Activated naive CD4-positive, alpha-beta T cell treated with anti-CD3 and anti-CD28 coated beads for 36 hours (primary cell): ENCODE measurements at regions of chr2 and their contacts with region 1.

Region 1: DNA sequence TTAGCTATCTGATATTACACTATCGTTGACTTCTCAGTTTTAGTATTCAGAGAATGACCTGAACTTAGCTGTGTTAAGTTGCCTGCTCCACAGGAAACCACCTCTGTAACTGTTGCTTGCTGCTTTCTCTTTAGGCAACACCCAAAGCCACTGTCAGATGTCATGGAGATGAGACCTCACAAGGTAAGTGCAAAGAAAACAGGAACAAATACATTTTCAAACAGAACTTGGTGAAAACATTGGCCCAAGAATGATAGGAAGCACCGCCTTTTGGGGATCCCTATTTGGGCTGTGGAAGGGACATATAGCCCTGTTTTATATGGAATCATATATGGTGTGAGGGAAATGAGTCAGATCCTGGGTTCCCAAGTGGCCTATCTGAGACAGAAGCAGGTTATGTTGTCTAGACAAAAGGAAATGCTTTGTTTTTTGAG is 143.4 kb downstream of the UBE2E3 start:
- DNase-seq: peak; percentile 65
- H3K4me3 Mint-ChIP-seq: peak overlapping the region; percentile 65
- H3K27ac Mint-ChIP-seq: peak overlapping the region; percentile 89
- H3K4me1 Mint-ChIP-seq: peaks cover 54% of the 10 kb centered on the region
- H3K27me3 Mint-ChIP-seq: no peaks in the 10 kb centered on the region

Region 2: GRCh38 chr2:180472133-180472532 is 651.7 kb before region 1 on chr2:
- CTCF ChIA-PET with region 1: no interaction called
- intact Hi-C with region 1: no loop called
- DNase-seq: no peak
- H3K4me3 Mint-ChIP-seq: no peak overlapping the region
- H3K27ac Mint-ChIP-seq: no peak overlapping the region
- H3K4me1 Mint-ChIP-seq: no peaks in the 10 kb centered on the region
- H3K27me3 Mint-ChIP-seq: no peaks in the 10 kb centered on the region

Region 3: GRCh38 chr2:181140414-181140813 is 16.6 kb after region 1 on chr2:
- CTCF ChIA-PET with region 1: interaction called, 5 read pairs
- intact Hi-C with region 1: loop called (anchors 1 kb)
- DNase-seq: no peak
- H3K4me3 Mint-ChIP-seq: peak overlapping the region; percentile 68
- H3K27ac Mint-ChIP-seq: peak overlapping the region; percentile 65
- H3K4me1 Mint-ChIP-seq: peaks cover 63% of the 10 kb centered on the region
- H3K27me3 Mint-ChIP-seq: no peaks in the 10 kb centered on the region

Region 4: GRCh38 chr2:181165199-181165868 is 41.5 kb after region 1 on chr2:
- CTCF ChIA-PET with region 1: no interaction called
- intact Hi-C with region 1: loop called (anchors 2 kb)
- DNase-seq: peak; percentile 36
- H3K4me3 Mint-ChIP-seq: peak overlapping the region; percentile 54
- H3K27ac Mint-ChIP-seq: peak overlapping the region; percentile 90
- H3K4me1 Mint-ChIP-seq: peaks cover 53% of the 10 kb centered on the region
- H3K27me3 Mint-ChIP-seq: no peaks in the 10 kb centered on the region

Region 5: DNA sequence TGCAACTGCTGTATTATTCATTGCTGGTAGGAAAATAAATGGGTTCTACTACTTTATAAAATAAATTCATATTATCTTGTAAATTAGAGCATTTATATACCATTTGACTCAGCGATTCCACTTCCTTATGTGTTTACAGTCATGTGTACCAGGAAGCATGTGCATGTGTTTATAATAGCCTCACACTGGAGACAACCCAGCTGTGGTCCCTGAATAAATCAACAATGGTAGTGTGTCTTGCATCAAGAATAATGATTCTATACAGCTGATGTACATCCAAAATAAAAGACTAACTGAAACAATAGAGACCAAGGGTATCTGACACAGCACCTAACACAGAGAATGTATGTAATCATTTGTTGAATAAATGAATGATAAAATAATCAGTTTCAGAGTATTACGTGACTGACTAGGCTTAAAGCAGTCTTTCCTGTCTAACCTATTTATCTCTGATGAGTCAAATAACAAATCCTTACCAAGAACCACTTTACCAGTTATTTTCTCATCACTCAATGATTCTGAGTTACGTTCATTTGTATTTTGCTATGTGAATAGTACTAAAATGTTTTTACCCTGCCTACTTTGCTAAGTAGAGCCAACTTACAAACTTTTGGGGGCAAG is 73.4 kb after region 1 on chr2:
- CTCF ChIA-PET with region 1: interaction called, 3 read pairs
- intact Hi-C with region 1: loop called (anchors 2 kb)
- DNase-seq: no peak
- H3K4me3 Mint-ChIP-seq: no peak overlapping the region
- H3K27ac Mint-ChIP-seq: peak overlapping the region; percentile 26
- H3K4me1 Mint-ChIP-seq: peaks cover 38% of the 10 kb centered on the region
- H3K27me3 Mint-ChIP-seq: no peaks in the 10 kb centered on the region

Region 6: DNA sequence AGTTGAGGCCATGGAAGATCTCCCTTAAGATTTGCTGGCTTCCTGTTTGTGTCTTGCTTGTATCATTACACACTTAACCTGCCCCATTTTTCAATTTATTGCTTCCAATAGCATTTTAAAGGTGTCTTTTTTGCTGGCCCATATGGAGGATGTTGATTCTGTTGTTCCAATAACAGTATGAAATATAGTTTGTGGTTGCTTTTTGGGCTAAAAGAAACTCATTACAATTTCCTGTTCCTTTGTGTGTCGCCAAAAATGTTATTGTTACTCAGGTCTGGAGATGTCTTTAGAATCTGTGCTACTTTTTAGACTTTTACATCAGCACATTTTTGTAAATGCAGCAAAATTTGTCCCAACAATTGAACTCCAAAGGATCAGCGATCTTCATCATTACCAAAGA is 99.4 kb after region 1 on chr2:
- CTCF ChIA-PET with region 1: no interaction called
- intact Hi-C with region 1: loop called (anchors 1 kb)
- DNase-seq: no peak
- H3K4me3 Mint-ChIP-seq: peak overlapping the region; percentile 59
- H3K27ac Mint-ChIP-seq: peak overlapping the region; percentile 80
- H3K4me1 Mint-ChIP-seq: peaks cover 30% of the 10 kb centered on the region
- H3K27me3 Mint-ChIP-seq: no peaks in the 10 kb centered on the region

Region 7: DNA sequence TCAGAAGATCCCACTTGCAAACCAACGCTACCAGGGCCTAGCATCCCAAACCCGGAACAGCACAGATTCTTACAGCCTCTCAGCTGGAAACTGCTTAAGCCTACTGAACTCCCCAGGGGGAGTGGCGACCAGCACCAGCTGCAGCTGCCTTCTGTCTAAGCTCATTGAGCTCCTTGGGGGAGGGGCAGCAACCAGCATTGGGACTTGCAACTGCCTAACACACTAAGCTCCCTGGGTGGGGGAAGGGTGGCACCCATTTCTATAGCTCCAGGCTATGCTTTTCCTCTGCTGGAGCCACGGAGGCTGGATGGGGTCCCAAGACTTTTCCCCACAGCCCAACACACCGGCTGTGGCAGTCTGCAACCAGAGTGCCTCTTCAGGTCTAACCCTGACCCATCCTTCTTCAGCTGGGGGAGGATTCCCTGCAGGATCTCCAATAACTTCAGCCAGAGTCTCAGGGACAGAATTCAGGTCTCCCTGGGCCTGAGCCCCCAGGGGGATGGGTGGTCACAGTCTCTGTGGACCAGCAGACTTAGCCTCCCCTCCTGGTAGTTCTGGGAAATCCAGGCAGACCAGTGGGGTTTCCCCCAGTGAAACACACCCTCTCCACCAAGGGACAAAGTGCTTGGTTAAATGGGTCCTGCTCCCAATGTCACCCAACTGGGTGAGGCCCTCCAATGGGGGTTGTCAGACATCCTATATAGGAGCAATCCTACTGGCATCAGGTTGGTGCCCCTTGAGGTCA is 287.5 kb after region 1 on chr2:
- CTCF ChIA-PET with region 1: no interaction called
- intact Hi-C with region 1: no loop called
- DNase-seq: no peak
- H3K4me3 Mint-ChIP-seq: no peak overlapping the region
- H3K27ac Mint-ChIP-seq: no peak overlapping the region
- H3K4me1 Mint-ChIP-seq: peaks cover 3% of the 10 kb centered on the region
- H3K27me3 Mint-ChIP-seq: no peaks in the 10 kb centered on the region